ENCODE measurements at regions of chr15 and their contacts with region 1.

Region 1: DNA sequence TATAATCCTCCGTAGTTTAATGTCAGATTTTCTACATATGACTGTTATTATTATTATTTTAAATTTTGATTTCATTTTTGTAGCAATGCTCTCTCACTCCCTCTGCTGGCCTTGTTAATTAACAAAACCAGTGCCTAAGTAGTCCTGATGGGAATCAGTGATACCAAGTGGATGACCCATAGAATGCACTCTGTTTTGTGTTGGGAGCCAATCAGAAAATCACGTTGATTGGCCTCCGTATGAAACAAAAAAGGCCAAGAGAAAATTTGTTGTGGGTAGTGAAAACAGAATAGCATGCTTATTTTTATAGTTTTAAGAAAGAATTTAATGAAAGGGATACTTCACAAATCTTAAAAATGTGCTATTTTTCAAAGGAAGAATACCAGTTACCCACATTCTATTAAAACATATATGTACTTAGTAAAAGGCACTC is 34.4 kb upstream of the MEIS2 start:
- DNase-seq: no peak

Region 2: GRCh38 chr15:36501063-36501678 is 633.5 kb before region 1 on chr15:
- intact Hi-C with region 1: loop called in 1 of 2 experiments (anchors 10 kb)
- DNase-seq: no peak

Region 3: DNA sequence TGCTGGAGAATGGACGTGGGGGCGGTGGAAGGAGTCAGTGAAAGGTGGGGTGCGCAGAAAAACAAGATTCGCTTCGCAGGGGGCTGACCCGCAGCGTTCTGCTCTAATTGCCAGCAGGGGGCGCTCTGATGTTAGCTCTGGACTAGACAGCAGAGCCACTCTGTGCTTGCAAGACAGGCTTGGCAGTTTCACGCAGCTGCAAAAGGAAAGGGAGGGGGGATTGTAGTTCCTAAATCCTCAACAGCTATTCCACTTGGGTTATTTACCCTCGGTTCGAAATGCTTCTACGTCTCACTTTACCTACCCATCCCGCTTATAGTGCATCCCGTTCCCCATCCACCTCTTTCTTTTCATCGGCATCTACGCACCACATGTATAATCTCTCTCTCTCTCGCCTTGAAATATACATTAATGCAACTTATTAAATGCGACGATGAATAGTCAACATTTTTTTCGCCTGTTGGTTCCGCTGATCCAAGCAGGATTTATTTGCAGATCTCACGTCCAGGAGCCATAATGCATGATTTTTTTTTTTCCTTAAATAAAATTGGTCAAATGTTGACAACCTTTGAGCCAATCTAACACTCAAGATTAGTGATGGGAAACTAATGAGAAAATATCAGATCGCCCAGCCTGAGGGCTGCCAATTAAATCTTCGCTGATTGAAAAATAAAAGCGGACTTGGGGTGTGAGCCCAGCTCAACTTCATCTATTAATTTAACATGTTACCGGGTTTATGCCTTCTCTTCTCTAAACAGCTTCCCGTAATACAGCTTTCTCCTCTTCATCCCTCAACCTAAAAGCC is 250.8 kb before region 1 on chr15:
- intact Hi-C with region 1: loop called in 1 of 2 experiments (anchors 5 kb)
- DNase-seq: peak; percentile 94

Region 4: GRCh38 chr15:37045859-37046740 is 88.6 kb before region 1 on chr15:
- intact Hi-C with region 1: no loop called
- DNase-seq: no peak

Region 5: DNA sequence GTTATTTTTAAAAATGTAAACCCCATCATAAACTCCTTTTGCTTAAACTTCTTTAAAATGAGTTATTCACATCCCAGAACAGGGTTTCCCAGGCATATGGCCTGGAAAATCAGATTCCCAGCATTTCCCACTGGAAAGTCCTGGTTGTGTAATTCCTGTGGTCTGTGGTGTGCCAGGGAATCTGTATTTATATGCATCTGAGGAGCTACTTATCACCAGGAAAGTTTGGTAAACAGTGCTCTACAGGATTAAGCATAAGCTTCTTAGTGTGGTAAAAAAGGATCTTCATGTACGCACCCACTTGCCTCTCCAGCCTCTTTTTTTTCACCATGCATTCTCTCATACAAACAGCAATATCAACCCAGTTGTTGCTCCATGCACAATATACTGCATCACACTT is 62.5 kb before region 1 on chr15:
- intact Hi-C with region 1: no loop called
- DNase-seq: no peak

Region 6: GRCh38 chr15:37109872-37110572 is 24.7 kb before region 1 on chr15:
- intact Hi-C with region 1: loop called in 1 of 2 experiments (anchors 1 kb)
- DNase-seq: no peak

Measured in posterior vena cava (tissue), 2 donors.